Activated B cell treated with CpG ODN at 0.5 μM for 24 hours (primary cell): ENCODE measurements at regions of chr20 and their contacts with region 1.

Region 1: GRCh38 chr20:2206957-2207769 is 88.6 kb upstream of the TGM3 start:
- DNase-seq: peak; percentile 76
- ATAC-seq: peak; percentile 76
- H3K4me3 Mint-ChIP-seq: peak overlapping the region; percentile 82
- H3K27ac Mint-ChIP-seq: peak overlapping the region; percentile 38
- H3K4me1 Mint-ChIP-seq: peaks cover 19% of the 10 kb centered on the region
- H3K27me3 Mint-ChIP-seq: no peaks in the 10 kb centered on the region
- CTCF ChIP-seq: no peak

Region 2: DNA sequence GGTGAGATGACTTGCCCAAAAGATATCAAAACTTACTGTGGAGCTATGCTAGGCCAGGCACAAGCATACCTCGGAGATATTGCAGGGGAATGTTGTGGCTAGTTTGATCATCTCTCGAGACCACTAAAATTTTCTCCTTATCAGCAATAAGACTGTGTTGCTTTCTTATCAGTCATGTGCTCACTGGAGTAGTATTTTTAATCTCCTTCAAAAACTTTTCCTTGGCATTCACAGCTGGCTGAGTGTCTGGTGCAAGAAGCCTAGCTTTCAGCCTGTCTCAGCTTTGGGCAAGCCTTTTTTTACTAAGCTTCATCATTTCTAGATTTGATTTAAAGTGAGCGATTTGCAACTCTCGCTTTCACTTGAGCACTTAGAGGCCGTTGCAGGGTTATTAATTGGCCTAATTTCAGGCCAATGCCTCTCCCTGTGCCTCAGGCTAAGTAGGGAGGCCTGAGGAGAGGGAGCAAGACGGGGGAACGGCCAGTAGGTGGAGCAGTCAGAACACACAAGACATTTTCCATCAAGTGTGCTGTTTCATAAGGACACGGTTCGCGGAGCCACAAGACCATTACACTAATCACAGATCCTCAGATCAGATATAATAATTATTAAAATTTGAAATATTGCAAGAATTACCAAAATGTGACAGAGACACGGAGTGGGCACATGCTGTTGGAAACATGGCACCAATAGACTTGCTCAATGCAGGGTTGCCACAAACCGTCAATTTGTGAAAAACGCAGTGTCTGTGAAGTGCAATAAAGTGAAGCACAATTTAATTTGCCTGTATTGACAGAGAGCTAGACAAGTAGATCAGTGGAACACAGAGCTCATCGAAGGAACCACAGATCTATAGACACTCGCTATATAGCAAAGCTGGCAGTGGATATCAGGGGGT is 442.8 kb before region 1 on chr20:
- CTCF ChIA-PET with region 1: interaction called, 10 read pairs
- POLR2A ChIA-PET with region 1: interaction called, 9 read pairs
- intact Hi-C with region 1: no loop called
- DNase-seq: peak; percentile 46
- ATAC-seq: peak; percentile 86
- H3K4me3 Mint-ChIP-seq: no peak overlapping the region
- H3K27ac Mint-ChIP-seq: no peak overlapping the region
- H3K4me1 Mint-ChIP-seq: peaks cover 2% of the 10 kb centered on the region
- H3K27me3 Mint-ChIP-seq: peaks cover 5% of the 10 kb centered on the region
- CTCF ChIP-seq: peak; percentile 45

Region 3: GRCh38 chr20:1888796-1889463 is 318.2 kb before region 1 on chr20:
- CTCF ChIA-PET with region 1: no interaction called
- POLR2A ChIA-PET with region 1: no interaction called
- intact Hi-C with region 1: no loop called
- DNase-seq: no peak
- ATAC-seq: no peak
- H3K4me3 Mint-ChIP-seq: no peak overlapping the region
- H3K27ac Mint-ChIP-seq: no peak overlapping the region
- H3K4me1 Mint-ChIP-seq: peaks cover 17% of the 10 kb centered on the region
- H3K27me3 Mint-ChIP-seq: peaks cover 3% of the 10 kb centered on the region
- CTCF ChIP-seq: no peak

Region 4: GRCh38 chr20:2149507-2149906 is 57.7 kb before region 1 on chr20:
- CTCF ChIA-PET with region 1: no interaction called
- POLR2A ChIA-PET with region 1: no interaction called
- intact Hi-C with region 1: no loop called
- DNase-seq: no peak
- ATAC-seq: no peak
- H3K4me3 Mint-ChIP-seq: no peak overlapping the region
- H3K27ac Mint-ChIP-seq: no peak overlapping the region
- H3K4me1 Mint-ChIP-seq: no peaks in the 10 kb centered on the region
- H3K27me3 Mint-ChIP-seq: no peaks in the 10 kb centered on the region
- CTCF ChIP-seq: no peak

Region 5: DNA sequence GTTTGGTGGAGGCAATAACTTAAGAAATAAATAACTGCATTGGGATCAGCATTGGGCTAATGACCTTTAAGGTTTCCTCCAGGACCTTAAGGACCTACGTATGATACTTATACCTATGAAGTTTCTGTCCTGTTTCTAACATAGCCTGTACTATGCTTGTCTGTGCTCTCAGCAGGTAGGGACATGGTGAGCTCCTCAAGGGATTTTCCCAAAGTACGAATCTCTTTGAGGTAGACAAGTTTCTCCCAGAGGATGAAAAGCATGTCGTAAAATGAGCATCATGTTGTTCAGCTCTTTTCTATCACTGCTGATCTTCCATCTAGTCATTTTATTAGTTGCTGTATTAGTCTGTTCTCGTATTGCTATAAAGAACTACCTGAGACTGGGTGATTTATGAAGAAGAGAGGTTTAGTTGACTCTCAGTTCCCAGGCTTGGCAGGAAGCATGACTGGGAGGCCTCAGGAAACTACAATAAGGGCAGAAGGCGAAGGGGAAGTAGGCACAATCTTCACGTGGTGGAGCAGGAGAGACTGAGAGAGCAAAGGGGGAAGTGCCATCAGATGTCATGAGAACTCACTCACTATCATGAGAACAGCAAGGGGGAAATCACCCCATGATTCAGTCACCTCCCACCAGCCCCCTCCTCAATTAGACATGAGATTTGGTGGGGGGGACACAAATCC is 10.8 kb after region 1 on chr20:
- CTCF ChIA-PET with region 1: interaction called, 18 read pairs
- POLR2A ChIA-PET with region 1: interaction called, 3 read pairs
- intact Hi-C with region 1: loop called (anchors 1 kb)
- DNase-seq: peak; percentile 21
- ATAC-seq: peak; percentile 92
- H3K4me3 Mint-ChIP-seq: peak overlapping the region; percentile 75
- H3K27ac Mint-ChIP-seq: peak overlapping the region; percentile 97
- H3K4me1 Mint-ChIP-seq: peaks cover 33% of the 10 kb centered on the region
- H3K27me3 Mint-ChIP-seq: no peaks in the 10 kb centered on the region
- CTCF ChIP-seq: no peak

Region 6: GRCh38 chr20:2349818-2350508 is 142.8 kb after region 1 on chr20:
- CTCF ChIA-PET with region 1: interaction called, 7 read pairs
- POLR2A ChIA-PET with region 1: interaction called, 11 read pairs
- intact Hi-C with region 1: loop called (anchors 1 kb)
- DNase-seq: no peak
- ATAC-seq: no peak
- H3K4me3 Mint-ChIP-seq: no peak overlapping the region
- H3K27ac Mint-ChIP-seq: no peak overlapping the region
- H3K4me1 Mint-ChIP-seq: peaks cover 3% of the 10 kb centered on the region
- H3K27me3 Mint-ChIP-seq: peaks cover 20% of the 10 kb centered on the region
- CTCF ChIP-seq: no peak

Region 7: DNA sequence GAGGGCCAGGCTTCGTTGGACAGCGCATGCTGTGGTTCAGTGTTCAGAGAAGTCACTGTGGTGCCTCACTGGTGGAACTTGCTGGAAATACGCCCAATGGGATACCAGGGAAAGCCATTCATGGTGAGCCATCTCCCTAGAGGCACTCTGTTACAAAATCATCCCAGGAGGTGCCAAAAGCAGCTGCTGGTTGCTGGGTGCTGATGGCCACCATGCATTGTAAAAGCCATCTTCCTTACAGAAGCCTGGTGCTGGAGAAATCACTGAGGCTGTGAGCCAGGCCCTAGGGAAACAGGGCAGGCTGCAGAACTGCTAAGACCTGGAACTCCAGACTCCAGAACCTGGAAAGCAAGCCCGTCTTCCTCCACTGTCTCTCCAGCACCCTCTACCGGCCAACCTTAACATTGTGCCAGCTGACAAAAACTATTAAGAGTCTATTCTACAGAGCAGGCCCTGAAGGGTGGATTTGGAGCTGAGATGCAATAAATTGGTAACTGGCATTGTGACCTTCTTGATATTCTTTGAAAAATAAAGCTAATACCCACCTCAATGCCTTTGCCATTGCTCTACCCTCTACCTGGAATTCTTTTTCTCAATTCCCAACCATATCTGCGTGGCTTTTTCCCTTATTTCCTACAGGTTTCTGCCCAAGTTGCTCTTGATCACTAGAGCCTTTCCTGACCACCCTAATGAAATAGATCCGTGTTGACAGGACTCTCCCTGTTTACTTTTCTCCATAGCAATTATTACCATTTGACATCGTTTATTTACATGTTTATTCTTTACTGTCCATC is 245.0 kb after region 1 on chr20:
- CTCF ChIA-PET with region 1: interaction called, 71 read pairs
- POLR2A ChIA-PET with region 1: interaction called, 4 read pairs
- intact Hi-C with region 1: loop called (anchors 1 kb)
- DNase-seq: peak; percentile 23
- ATAC-seq: peak; percentile 54
- H3K4me3 Mint-ChIP-seq: no peak overlapping the region
- H3K27ac Mint-ChIP-seq: no peak overlapping the region
- H3K4me1 Mint-ChIP-seq: peaks cover 2% of the 10 kb centered on the region
- H3K27me3 Mint-ChIP-seq: no peaks in the 10 kb centered on the region
- CTCF ChIP-seq: no peak

Region 8: DNA sequence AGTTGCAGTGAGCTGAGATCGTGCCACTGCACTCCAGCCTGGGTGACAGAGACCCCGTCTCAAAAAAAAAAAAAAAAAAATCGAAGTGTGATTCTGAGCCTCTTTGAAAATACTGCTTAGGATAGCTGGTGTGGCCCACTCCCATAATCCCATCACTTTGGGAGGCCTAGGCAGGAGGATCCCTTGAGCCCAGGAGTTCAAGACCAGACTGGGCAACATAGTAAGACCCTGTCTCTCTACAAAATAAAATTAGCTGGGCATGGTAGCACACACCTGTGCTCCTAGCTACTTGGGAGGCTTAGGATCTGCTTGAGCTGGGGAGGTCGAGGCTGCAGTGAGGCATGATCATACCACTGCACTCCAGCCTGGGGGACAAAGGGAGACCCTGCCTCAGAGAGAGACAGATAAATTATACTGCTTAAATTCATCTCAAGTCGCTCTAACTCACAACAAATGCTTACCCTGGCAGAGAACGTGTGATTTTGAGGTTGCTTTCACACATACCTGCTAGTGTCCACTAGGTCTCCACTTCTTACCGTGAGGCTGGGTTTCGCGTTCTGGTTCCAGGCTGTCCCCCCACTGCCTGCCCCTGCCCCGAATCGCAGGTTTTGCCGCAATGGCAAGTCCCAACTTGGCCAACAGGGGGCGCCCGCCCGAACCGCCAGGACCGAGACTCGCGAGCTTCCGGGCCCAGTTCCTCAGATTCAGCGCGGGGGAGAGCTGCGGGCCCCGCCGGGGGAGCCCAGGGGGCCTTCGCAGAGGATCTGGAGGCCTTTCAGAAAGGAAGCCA is 317.0 kb after region 1 on chr20:
- CTCF ChIA-PET with region 1: interaction called, 13 read pairs
- POLR2A ChIA-PET with region 1: interaction called, 3 read pairs
- intact Hi-C with region 1: loop called (anchors 5 kb)
- DNase-seq: peak; percentile 91
- ATAC-seq: peak; percentile 80
- H3K4me3 Mint-ChIP-seq: peak overlapping the region; percentile 90
- H3K27ac Mint-ChIP-seq: peak overlapping the region; percentile 75
- H3K4me1 Mint-ChIP-seq: peaks cover 15% of the 10 kb centered on the region
- H3K27me3 Mint-ChIP-seq: peaks cover 4% of the 10 kb centered on the region
- CTCF ChIP-seq: peak; percentile 81